ENCODE measurements at regions of chr15 and their contacts with region 1.

Region 1: DNA sequence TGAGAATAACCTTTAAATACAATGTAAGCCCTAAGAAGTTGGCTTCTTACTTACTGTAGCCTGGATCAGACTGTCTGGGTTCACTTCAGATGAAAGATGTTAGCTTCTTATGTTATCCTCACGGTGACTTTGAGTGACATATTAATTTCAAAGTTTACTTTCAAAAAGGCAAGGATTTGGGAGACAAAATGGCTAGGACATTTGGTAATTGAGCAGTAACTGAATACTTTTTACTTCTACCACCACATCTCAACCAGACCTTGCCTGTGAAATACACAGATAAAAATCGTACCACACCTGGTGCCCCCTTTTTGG is 36.0 kb upstream of the BNIP2 start:
- DNase-seq: no peak
- H3K4me3 ChIP-seq: no peak overlapping the region
- H3K27ac ChIP-seq: no peak overlapping the region
- H3K4me1 ChIP-seq: no peaks in the 10 kb centered on the region
- H3K27me3 ChIP-seq: no peaks in the 10 kb centered on the region; a peak in 1 of 7 replicates
- CTCF ChIP-seq: no peak
- EP300 ChIP-seq: no peak
- POLR2A ChIP-seq: no peak
- RAD21 ChIP-seq: no peak

Region 2: GRCh38 chr15:59711451-59712243 is 13.5 kb before region 1 on chr15:
- CTCF ChIA-PET with region 1: interaction called, 10 read pairs
- POLR2A ChIA-PET with region 1: no interaction called
- DNase-seq: no peak
- H3K4me3 ChIP-seq: no peak overlapping the region
- H3K27ac ChIP-seq: no peak overlapping the region
- H3K4me1 ChIP-seq: no peaks in the 10 kb centered on the region
- H3K27me3 ChIP-seq: no peaks in the 10 kb centered on the region
- CTCF ChIP-seq: no peak
- EP300 ChIP-seq: no peak
- POLR2A ChIP-seq: no peak
- RAD21 ChIP-seq: no peak

Region 3: GRCh38 chr15:59741274-59741906 is 16.3 kb after region 1 on chr15:
- CTCF ChIA-PET with region 1: interaction called, 29 read pairs
- POLR2A ChIA-PET with region 1: no interaction called
- DNase-seq: no peak
- H3K4me3 ChIP-seq: no peak overlapping the region
- H3K27ac ChIP-seq: no peak overlapping the region
- H3K4me1 ChIP-seq: no peaks in the 10 kb centered on the region
- H3K27me3 ChIP-seq: no peaks in the 10 kb centered on the region
- CTCF ChIP-seq: peak in 2 of 3 experiments; percentile 62 to 73; a peak in 3 of 4 replicates
- EP300 ChIP-seq: no peak
- POLR2A ChIP-seq: no peak
- RAD21 ChIP-seq: peak; percentile 77 to 83

Region 4: GRCh38 chr15:59751552-59752413 is 26.7 kb after region 1 on chr15:
- CTCF ChIA-PET with region 1: interaction called, 12 read pairs
- POLR2A ChIA-PET with region 1: no interaction called
- DNase-seq: no peak
- H3K4me3 ChIP-seq: no peak overlapping the region
- H3K27ac ChIP-seq: no peak overlapping the region
- H3K4me1 ChIP-seq: peaks cover 0 to 3% (median 0%) of the 10 kb centered on the region in 4 experiments; a peak in 1 of 7 replicates
- H3K27me3 ChIP-seq: no peaks in the 10 kb centered on the region; a peak in 1 of 7 replicates
- CTCF ChIP-seq: peak in 2 of 3 experiments; percentile 91 to 99; a peak in 3 of 4 replicates
- EP300 ChIP-seq: no peak
- POLR2A ChIP-seq: no peak
- RAD21 ChIP-seq: peak; percentile 91 to 92

Region 5: DNA sequence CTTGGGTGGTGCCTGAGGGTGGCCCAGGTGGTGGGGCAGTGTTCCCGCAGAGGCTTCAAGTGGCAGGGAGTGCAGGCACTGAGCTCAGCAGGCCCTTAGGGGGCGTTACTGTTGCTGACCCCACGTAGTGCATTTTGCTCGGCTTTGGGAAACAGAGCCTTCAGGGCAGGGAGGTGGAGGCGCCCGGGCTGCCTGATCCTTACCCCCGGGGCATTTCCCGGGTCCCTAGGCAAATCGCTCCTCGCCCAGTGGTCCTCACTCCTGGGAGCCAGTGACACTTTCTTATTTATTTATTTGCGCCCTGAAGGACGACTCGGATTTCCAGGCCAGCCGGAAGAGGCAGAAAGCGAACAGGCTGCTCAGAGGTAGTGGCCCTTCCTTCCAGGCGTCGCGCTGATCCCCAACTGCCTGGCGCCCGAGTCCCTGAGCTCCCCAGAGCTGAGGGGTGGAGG is 268.8 kb after region 1 on chr15:
- CTCF ChIA-PET with region 1: interaction called, 11 read pairs
- POLR2A ChIA-PET with region 1: no interaction called
- DNase-seq: peak in 1 of 2 experiments; percentile 74
- H3K4me3 ChIP-seq: peak overlapping the region; percentile 31 to 63 (median 58)
- H3K27ac ChIP-seq: no peak overlapping the region
- H3K4me1 ChIP-seq: peaks cover 5 to 23% (median 15%) of the 10 kb centered on the region in 4 experiments; a peak in 6 of 7 replicates
- H3K27me3 ChIP-seq: peaks cover 0 to 34% (median 17%) of the 10 kb centered on the region in 4 experiments; a peak in 6 of 7 replicates
- CTCF ChIP-seq: peak; percentile 76 to 82 (median 77)
- EP300 ChIP-seq: no peak
- POLR2A ChIP-seq: no peak
- RAD21 ChIP-seq: peak; percentile 51 to 62

Measured in H1 (cell line).